Left lung (tissue), 14 donors: ENCODE measurements at regions of chr1 and their contacts with region 1.

Region 1: DNA sequence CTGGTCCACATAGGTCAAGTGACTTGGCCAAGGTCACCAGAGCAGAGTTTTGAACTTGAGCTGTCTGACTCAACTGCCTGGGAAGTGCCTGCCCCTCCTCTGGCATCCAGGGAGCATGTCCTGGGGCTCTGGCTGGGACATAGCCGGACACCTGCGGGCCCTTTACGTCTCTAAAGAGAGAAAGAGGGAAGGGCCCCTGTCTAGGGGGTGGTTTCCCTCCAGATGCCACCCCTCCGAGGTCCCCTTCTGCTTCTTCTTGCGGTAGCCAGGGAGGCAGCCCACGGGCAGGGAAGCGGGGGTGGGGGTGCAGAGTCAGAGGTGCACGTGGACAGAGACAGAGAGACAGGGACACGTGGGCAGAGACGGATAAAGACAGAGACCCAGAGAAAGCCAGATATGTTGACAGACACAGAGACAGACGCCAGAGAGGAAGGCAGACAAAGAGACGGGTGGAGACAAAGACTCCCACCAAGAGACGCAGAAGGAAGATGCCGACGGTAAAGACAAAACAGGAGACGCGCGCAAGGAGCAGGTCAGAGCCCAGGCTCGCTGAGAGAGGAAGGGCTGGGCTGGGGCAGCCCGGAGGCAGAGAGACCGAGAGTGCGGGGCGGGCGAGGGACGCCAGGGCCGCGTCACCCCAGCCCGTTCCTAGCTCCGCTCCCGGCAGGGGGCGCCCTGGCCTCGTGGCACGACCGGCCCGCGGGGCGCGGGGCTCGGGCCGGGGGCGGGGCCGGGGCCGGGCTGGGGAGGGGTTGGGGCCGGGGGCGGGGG is 458 bp upstream of the ALPL start:
- DNase-seq: peak in 3 of 4 donors; percentile 66 to 98 (median 73)
- ATAC-seq: peak; percentile 83
- H3K4me3 ChIP-seq: peak overlapping the region in 1 of 2 donors; percentile 47
- H3K27ac ChIP-seq: no peak overlapping the region
- H3K4me1 ChIP-seq: peaks cover 22 to 47% of the 10 kb centered on the region in 2 donors
- H3K27me3 ChIP-seq: peaks cover 8 to 76% of the 10 kb centered on the region in 2 donors
- CTCF ChIP-seq: peak; percentile 31 to 75

Region 2: DNA sequence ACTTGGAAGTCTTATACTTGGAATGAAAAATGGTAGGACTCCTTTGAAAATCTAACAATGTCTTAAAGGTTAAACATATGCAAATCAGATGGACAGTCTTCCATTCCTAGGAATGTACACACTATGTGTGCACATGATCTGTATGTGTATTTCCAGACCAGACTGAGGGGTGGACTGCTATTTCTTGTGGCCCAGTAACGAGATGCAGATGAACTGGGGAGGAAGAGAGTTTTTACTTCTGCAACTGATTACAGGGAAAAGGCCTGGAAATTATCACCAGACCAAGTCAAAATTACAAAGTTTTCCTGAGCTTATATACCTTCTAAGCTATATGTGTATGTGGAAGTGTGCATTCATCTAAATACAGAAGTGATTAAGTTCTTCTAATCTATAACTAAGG is 51.1 kb before region 1 on chr1:
- intact Hi-C with region 1: no loop called
- DNase-seq: no peak
- ATAC-seq: no peak
- H3K4me3 ChIP-seq: no peak overlapping the region
- H3K27ac ChIP-seq: no peak overlapping the region
- H3K4me1 ChIP-seq: peaks cover 0 to 11% of the 10 kb centered on the region in 2 donors
- H3K27me3 ChIP-seq: no peaks in the 10 kb centered on the region
- CTCF ChIP-seq: no peak

Region 3: DNA sequence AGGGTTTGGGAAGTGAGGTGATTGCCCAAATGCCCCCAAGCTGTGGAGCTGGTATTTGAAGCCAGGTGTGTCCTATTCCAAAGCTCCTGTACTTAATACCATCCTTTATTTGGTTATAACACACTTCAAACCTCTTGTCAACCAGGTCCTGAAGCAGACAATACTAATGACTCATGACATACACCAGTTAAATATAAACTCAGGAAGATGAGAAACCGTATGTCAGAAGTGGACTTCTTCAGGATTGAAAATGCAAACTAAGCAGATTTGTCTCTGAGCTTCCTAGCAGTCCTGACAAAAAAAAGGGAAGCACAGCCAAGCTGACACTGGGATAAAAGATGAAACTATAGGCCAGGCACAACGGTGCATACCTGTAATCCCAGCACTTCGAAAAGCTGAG is 71.0 kb after region 1 on chr1:
- intact Hi-C with region 1: no loop called
- DNase-seq: no peak
- ATAC-seq: peak; percentile 53
- H3K4me3 ChIP-seq: no peak overlapping the region
- H3K27ac ChIP-seq: no peak overlapping the region
- H3K4me1 ChIP-seq: peaks cover 0 to 19% of the 10 kb centered on the region in 2 donors
- H3K27me3 ChIP-seq: peaks cover 0 to 9% of the 10 kb centered on the region in 2 donors
- CTCF ChIP-seq: no peak

Region 4: DNA sequence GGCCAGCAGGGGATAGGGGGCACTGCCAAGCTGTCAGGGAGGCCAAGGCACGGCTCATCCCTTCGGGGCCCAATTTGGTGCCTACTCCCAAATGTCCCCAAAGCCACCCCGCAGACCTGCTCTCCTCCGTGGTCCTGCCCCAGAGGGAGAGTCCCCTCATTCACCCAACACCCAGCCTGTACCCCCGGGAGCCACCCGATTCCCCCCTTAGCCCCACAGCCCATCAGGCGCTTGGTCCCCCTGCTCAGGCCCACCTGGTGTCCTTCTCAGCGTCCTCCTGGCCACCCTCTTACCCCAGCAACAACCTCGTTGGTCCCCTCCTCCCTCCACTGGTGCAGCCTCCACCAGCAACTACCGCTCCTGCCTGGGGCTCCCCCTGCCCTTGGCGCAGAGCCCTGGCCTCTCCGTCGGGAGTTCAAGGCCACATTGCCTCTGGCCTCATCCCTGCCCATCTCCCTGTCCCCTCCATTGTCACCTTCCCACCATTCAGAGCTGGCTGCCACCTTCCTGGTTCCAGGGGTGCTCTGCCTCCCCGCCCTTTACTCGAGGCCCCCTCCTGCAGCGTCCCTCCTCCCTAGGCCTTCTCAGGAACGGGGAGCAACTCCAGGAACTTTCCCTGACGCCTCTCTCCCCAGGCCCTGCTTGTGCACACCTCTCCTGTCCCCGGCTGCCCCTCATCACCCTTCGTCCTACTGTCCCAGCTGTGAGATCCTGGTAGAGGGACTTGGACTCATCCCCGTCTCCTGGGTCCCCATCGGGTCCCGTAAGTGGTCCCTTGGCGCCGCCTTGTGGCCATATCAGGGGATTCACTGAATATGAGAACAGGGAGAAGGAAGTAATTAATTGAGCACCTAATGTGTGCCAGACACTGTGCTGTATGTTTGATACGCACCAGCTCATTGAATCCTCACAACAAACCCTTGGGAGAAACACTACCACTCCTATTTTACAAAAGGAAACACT is 86.5 kb after region 1 on chr1:
- intact Hi-C with region 1: loop called in 1 of 2 experiments (anchors 10 kb)
- DNase-seq: peak in 2 of 4 donors; percentile 67 to 94
- ATAC-seq: peak; percentile 48
- H3K4me3 ChIP-seq: no peak overlapping the region
- H3K27ac ChIP-seq: no peak overlapping the region
- H3K4me1 ChIP-seq: peaks cover 0 to 9% of the 10 kb centered on the region in 2 donors
- H3K27me3 ChIP-seq: peaks cover 0 to 48% of the 10 kb centered on the region in 2 donors
- CTCF ChIP-seq: peak; percentile 49 to 77

Region 5: GRCh38 chr1:21659099-21659923 is 150.5 kb after region 1 on chr1:
- intact Hi-C with region 1: loop called in 1 of 2 experiments (anchors 10 kb)
- DNase-seq: peak; percentile 56 to 95 (median 79)
- ATAC-seq: peak; percentile 94
- H3K4me3 ChIP-seq: no peak overlapping the region
- H3K27ac ChIP-seq: no peak overlapping the region
- H3K4me1 ChIP-seq: peaks cover 0 to 5% of the 10 kb centered on the region in 2 donors
- H3K27me3 ChIP-seq: peaks cover 0 to 57% of the 10 kb centered on the region in 2 donors
- CTCF ChIP-seq: peak; percentile 95 to 97